Posterior vena cava (tissue), 2 donors: ENCODE measurements at regions of chr3 and their contacts with region 1.

Region 1: GRCh38 chr3:95460274-95460673 is 1354.1 kb upstream of the EPHA6 start:
- DNase-seq: no peak

Region 2: GRCh38 chr3:94665922-94666321 is 794.4 kb before region 1 on chr3:
- intact Hi-C with region 1: loop called in 1 of 2 experiments (anchors 10 kb)
- DNase-seq: no peak

Region 3: GRCh38 chr3:96111951-96112350 is 651.7 kb after region 1 on chr3:
- intact Hi-C with region 1: loop called in 1 of 2 experiments (anchors 5 kb)
- DNase-seq: no peak

Region 4: DNA sequence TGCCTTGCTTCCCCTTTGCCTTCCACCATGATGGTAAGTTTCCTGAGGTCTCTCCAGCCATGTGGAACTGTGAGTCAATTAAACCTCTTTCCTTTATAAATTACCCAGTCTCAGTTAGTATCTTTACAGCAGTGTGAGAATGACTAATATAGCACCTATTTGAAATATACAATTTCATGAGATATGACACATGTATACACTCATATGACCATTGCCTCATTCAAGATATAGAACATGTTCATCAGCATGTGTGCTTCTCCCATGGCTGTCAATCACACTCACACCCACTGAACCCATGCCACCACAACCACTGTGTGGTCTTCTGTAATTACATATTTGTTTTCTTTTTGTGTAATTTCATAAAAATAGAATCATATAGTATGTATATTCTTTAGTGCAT is 754.7 kb after region 1 on chr3:
- intact Hi-C with region 1: loop called in 1 of 2 experiments (anchors 5 kb)
- DNase-seq: no peak